Dendritic cell treated with granulocyte-macrophage colony-stimulating factor and Interleukin-4, amounts not matched to agents 40 ng/mL and 50 ng/mL, for 4 days (primary cell): ENCODE measurements at regions of chr4 and their contacts with region 1.

Region 1: DNA sequence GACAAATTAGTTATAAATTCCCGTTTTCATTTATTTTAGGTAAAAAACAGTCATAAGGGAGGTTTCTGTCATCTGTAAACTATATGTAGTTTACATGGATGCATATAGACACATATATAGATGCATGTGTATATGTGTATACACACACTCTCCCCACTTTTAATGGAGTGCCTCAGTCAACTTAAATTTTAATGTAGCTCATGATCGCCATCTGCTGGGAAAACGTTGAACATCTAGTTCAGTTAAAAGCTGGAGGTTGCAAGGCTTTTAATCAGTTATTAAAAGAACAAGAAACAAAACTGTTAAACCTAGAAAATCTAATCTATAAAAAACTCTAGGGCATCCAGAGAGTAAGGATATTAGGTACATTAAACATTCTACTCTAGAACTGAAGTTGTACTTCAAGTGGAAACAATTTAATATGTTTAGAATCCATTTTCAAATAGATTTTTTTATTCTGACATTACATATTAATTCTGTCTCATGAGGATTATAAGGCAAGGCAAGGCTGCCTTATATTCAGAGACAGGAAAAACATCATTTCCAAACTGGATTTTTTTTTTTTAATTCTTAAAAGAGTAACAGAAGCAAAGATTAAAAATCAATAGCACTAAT is 122.6 kb downstream of the SHISA3 start:
- H3K4me3 Mint-ChIP-seq: no peak overlapping the region
- H3K27ac Mint-ChIP-seq: no peak overlapping the region
- H3K4me1 Mint-ChIP-seq: no peaks in the 10 kb centered on the region
- H3K27me3 Mint-ChIP-seq: no peaks in the 10 kb centered on the region

Region 2: DNA sequence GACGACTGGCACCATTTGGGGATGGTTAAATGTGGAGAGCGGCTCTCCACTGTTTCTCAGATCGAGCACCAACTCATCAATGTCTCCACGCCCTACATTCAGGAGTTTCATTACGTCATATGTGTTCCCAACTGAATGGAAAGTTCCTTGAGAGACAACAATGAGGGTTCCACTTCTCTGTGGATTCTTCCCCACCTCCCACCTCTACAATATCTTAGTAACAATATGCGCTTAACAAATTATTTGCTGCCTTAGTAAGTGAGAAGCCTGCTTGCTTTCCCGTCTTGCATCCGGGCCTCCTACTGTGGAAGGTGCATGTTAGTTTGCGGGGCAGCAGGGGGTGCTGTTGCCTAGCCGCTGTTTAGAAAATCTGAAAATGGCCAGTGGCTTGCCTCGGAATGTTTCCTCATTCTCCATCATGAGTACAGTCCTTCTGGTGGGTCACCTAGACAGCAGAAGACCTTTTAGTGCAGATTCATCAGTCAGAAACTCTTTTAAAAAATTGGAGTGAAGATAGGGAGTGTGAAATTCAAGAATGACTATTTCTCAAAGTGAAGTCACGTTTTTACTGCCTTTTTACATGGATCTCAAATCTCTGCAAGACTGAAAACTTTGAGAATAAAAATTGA is 827.1 kb before region 1 on chr4:
- intact Hi-C with region 1: loop called (anchors 10 kb)
- H3K4me3 Mint-ChIP-seq: no peak overlapping the region
- H3K27ac Mint-ChIP-seq: no peak overlapping the region
- H3K4me1 Mint-ChIP-seq: no peaks in the 10 kb centered on the region
- H3K27me3 Mint-ChIP-seq: peaks cover 7% of the 10 kb centered on the region

Region 3: GRCh38 chr4:42282081-42282901 is 237.6 kb before region 1 on chr4:
- intact Hi-C with region 1: loop called (anchors 1 kb)
- H3K4me3 Mint-ChIP-seq: no peak overlapping the region
- H3K27ac Mint-ChIP-seq: no peak overlapping the region
- H3K4me1 Mint-ChIP-seq: peaks cover 10% of the 10 kb centered on the region
- H3K27me3 Mint-ChIP-seq: peaks cover 4% of the 10 kb centered on the region

Region 4: DNA sequence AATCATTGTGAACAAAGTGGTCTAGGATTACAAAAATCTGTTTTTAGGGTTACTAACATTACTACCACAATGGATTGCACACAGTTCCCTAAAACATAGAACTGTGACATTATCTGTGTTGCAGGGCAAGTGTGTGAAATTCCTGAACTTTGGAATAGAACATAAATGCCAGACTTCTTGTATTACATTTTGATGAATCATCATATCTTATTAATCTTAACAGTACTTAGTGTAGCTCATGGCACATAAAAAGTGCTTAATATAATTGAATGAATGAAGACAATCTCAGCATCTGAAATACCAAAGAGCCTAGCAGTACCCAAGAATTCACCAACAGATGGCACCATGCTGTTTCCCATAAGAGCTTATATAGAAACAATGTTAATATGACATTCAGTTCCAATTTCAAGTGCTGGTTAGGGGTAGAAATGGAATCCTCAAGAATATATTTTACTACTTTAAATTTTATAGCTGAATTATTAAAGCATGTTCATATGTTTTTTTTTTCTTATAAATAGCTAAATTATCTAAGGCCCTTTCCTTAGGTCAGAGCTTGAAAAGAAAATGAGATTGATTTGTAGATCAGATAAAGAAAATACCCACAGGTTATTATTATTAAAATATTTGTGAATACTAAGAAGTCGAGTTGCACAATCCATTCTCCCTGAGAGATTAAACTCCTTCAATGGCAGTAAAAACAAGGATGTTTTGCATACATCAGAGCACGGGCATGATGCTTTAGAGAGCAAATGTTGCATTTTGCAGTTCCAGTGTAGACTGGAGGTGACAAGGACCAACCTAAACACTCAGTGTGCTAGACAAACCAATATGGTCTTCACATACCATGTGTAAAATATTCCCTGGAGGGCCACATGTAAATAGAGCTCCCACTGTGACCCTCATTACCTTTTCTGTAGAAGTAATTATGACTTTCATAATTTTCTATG is 148.3 kb before region 1 on chr4:
- intact Hi-C with region 1: loop called (anchors 2 kb)
- H3K4me3 Mint-ChIP-seq: no peak overlapping the region
- H3K27ac Mint-ChIP-seq: no peak overlapping the region
- H3K4me1 Mint-ChIP-seq: no peaks in the 10 kb centered on the region
- H3K27me3 Mint-ChIP-seq: peaks cover 4% of the 10 kb centered on the region